GM12878 (cell line): ENCODE measurements at regions of chr5 and their contacts with region 1.

Region 1: GRCh38 chr5:173823711-173824528 is 64.2 kb upstream of the CPEB4 start:
- DNase-seq: no peak
- ATAC-seq: no peak
- H3K4me3 ChIP-seq: no peak overlapping the region
- H3K27ac ChIP-seq: peak overlapping the region; percentile 96
- H3K4me1 ChIP-seq: peaks cover 55% of the 10 kb centered on the region
- H3K27me3 ChIP-seq: no peaks in the 10 kb centered on the region
- CTCF ChIP-seq: no peak
- EP300 ChIP-seq: no peak
- POLR2A ChIP-seq: no peak
- RAD21 ChIP-seq: no peak

Region 2: GRCh38 chr5:173625696-173626504 is 198.0 kb before region 1 on chr5:
- CTCF ChIA-PET with region 1: interaction called, 12 read pairs
- POLR2A ChIA-PET with region 1: interaction called, 5 read pairs
- RAD21 ChIA-PET with region 1: interaction called, 8 read pairs
- SMC1A ChIA-PET with region 1: interaction called, 5 read pairs
- in situ Hi-C with region 1: no loop called
- intact Hi-C with region 1: no loop called
- DNase-seq: no peak
- ATAC-seq: peak; percentile 81
- H3K4me3 ChIP-seq: no peak overlapping the region
- H3K27ac ChIP-seq: no peak overlapping the region
- H3K4me1 ChIP-seq: peaks cover 9% of the 10 kb centered on the region
- H3K27me3 ChIP-seq: no peaks in the 10 kb centered on the region
- CTCF ChIP-seq: peak; percentile 60 to 71 (median 61)
- EP300 ChIP-seq: no peak
- POLR2A ChIP-seq: no peak
- RAD21 ChIP-seq: peak; percentile 85

Region 3: DNA sequence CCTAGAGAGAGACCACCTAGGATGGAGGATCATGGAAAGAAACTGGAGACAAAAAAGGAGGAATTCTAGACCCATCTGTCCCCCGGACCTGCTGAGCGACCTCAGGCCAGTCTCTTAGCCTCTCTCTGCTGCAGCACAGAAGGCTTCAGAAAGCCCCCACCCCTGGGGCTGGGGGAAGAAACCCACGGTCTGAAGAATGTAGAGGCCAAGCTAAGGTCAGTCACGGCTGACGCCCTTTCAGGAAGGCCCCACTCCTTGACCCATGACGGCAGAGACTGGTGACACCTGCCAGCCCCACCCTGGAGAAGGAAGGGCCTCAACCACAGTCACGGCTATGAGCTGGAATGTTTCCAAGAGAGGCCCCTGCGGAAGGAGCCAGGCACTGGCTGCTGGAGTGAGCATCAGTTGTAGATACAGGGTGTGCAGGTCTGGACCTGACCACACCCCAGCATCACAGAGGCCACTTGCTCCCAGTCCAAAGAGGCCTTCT is 87.0 kb before region 1 on chr5:
- CTCF ChIA-PET with region 1: no interaction called
- POLR2A ChIA-PET with region 1: interaction called, 20 read pairs
- RAD21 ChIA-PET with region 1: interaction called, 22 read pairs
- SMC1A ChIA-PET with region 1: interaction called, 6 read pairs
- in situ Hi-C with region 1: loop called (anchors 5 kb)
- intact Hi-C with region 1: loop called (anchors 2 kb)
- DNase-seq: peak; percentile 76
- ATAC-seq: peak; percentile 91
- H3K4me3 ChIP-seq: peak overlapping the region; percentile 30; the same call in 1 of the 2 replicates
- H3K27ac ChIP-seq: peak overlapping the region; percentile 76
- H3K4me1 ChIP-seq: peaks cover 63% of the 10 kb centered on the region
- H3K27me3 ChIP-seq: no peaks in the 10 kb centered on the region
- CTCF ChIP-seq: no peak
- EP300 ChIP-seq: peak; percentile 47 to 49; a peak in 1 of 4 replicates
- POLR2A ChIP-seq: peak; percentile 48; the same call in 1 of the 2 replicates
- RAD21 ChIP-seq: 0 out of 2 replicates have a peak, but pooled peaks have one; percentile 10

Region 4: GRCh38 chr5:173781814-173782670 is 41.9 kb before region 1 on chr5:
- CTCF ChIA-PET with region 1: interaction called, 87 read pairs
- POLR2A ChIA-PET with region 1: interaction called, 36 read pairs
- RAD21 ChIA-PET with region 1: interaction called, 147 read pairs
- SMC1A ChIA-PET with region 1: interaction called, 271 read pairs
- in situ Hi-C with region 1: no loop called
- intact Hi-C with region 1: loop called (anchors 1 kb)
- DNase-seq: peak; percentile 32
- ATAC-seq: peak; percentile 21
- H3K4me3 ChIP-seq: no peak overlapping the region
- H3K27ac ChIP-seq: 0 out of 2 replicates have a peak overlapping the region, but pooled peaks have one; percentile 4
- H3K4me1 ChIP-seq: peaks cover 36% of the 10 kb centered on the region
- H3K27me3 ChIP-seq: no peaks in the 10 kb centered on the region
- CTCF ChIP-seq: no peak
- EP300 ChIP-seq: no peak
- POLR2A ChIP-seq: no peak
- RAD21 ChIP-seq: no peak

Region 5: DNA sequence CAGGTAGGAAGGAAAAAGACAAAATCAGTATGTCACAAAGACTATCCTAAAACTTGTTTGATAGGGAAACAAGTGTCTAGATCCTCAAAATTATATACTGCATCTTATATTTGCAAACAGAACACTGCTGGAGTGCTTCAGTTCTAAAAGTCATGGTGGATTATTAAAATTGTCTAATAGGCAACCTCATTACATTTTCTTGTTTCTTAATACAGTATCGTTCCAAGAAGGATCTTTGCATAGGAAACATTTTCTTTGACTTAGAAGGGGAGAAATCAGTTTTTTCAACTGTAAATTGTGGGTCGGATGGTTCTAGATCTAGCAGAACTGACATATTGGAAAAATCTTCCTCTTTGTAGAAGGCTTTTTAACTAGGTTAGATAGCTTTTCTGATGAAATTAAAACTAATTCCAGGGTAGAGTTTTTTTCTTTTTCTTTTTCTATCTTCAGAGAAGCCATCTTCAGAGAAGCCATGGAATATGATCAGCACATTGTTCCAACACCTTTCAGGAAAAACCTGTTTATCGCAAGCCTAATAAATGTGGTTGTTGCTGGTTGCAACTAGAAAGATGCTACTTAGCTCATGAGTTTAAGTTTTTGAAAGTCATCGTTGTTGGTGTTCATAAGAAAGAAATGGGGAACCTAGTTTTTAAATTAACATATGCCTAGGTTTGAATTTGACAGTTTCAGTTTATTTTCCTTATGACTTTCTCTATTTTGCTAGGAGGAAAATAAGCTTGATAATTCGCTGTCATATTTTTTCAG is 71.7 kb after region 1 on chr5:
- CTCF ChIA-PET with region 1: interaction called, 31 read pairs
- POLR2A ChIA-PET with region 1: interaction called, 240 read pairs
- RAD21 ChIA-PET with region 1: interaction called, 395 read pairs
- SMC1A ChIA-PET with region 1: interaction called, 49 read pairs
- in situ Hi-C with region 1: no loop called
- intact Hi-C with region 1: no loop called
- DNase-seq: no peak
- ATAC-seq: peak; percentile 1; the same call in 1 of the 3 replicates
- H3K4me3 ChIP-seq: peak overlapping the region; percentile 54
- H3K27ac ChIP-seq: peak overlapping the region; percentile 65
- H3K4me1 ChIP-seq: peaks cover 3% of the 10 kb centered on the region; the same call in 1 of the 2 replicates
- H3K27me3 ChIP-seq: no peaks in the 10 kb centered on the region
- CTCF ChIP-seq: no peak
- EP300 ChIP-seq: no peak
- POLR2A ChIP-seq: no peak
- RAD21 ChIP-seq: no peak

Region 6: DNA sequence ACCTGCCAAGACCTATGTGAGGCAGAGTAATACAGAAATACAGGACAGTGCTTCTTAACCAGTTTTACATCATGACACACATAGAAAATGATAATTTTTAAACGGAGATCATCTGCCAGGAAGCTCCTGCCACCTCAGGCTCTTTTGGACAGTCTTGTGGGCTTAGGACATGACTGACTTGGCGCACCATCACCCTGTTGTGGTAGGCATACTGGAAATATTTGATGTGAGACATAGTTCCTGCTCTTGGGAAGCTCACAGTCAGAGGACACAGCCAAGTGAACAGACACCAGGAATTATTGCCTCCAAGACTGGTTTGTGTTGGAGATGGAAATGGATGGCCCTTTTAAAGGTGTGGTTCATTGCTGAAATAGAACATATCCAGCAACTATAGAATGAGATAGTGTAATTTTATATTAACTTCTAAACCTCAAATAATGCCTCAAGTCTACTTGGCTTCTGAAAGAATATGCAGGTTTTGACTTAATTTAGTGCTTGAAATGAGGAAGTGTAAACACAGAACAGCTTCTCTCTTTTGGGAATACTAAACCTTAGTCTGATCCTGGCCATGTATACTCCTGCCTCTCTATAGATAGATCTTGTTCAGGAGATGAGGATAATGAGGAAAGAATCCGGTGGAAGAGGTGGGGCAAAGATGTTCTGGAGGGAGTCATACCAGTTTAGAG is 83.9 kb after region 1 on chr5:
- CTCF ChIA-PET with region 1: interaction called, 6 read pairs
- POLR2A ChIA-PET with region 1: interaction called, 6 read pairs
- RAD21 ChIA-PET with region 1: interaction called, 15 read pairs
- SMC1A ChIA-PET with region 1: interaction called, 15 read pairs
- in situ Hi-C with region 1: no loop called
- intact Hi-C with region 1: no loop called
- DNase-seq: no peak
- ATAC-seq: peak; percentile 38
- H3K4me3 ChIP-seq: no peak overlapping the region
- H3K27ac ChIP-seq: peak overlapping the region; percentile 60
- H3K4me1 ChIP-seq: peaks cover 31% of the 10 kb centered on the region
- H3K27me3 ChIP-seq: no peaks in the 10 kb centered on the region
- CTCF ChIP-seq: no peak
- EP300 ChIP-seq: no peak
- POLR2A ChIP-seq: no peak
- RAD21 ChIP-seq: no peak

Region 7: DNA sequence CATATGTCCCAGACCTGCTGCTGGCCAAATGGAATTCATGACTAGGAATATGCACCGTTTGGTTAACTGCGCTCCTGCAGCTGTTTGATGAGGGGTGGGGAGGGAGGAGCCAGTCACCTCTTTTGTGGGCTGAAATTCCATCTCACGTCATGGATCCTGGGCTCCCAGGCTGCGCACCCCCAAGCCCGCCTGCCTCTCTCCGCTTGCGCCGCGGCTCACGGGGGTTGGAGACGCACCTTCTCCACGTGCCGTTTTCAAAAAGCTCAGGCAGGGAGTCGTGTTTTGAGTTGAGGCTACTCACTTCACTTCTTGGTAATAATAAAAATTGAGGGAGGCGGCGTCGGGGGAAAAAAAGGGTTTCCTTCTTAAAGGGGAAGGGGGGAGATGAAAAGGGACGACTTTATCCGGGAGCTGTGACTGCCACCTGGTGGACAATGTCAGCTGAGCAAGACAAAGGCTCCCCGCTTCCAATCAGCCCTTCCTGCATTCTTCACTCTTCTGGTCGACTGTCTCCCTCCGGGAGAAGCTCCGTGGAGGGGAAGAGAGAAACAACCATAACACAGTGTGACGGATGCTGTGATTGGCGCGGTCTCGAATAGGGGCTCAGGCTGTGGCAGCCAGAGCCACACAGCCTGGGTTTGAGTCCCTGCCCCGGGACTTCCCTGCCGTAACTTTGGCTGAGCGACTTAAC is 149.2 kb after region 1 on chr5:
- CTCF ChIA-PET with region 1: interaction called, 6 read pairs
- POLR2A ChIA-PET with region 1: interaction called, 3 read pairs
- RAD21 ChIA-PET with region 1: interaction called, 3 read pairs
- SMC1A ChIA-PET with region 1: interaction called, 5 read pairs
- in situ Hi-C with region 1: no loop called
- intact Hi-C with region 1: loop called (anchors 5 kb)
- DNase-seq: peak; percentile 40
- ATAC-seq: peak; percentile 92
- H3K4me3 ChIP-seq: peak overlapping the region; percentile 66
- H3K27ac ChIP-seq: no peak overlapping the region
- H3K4me1 ChIP-seq: peaks cover 12% of the 10 kb centered on the region
- H3K27me3 ChIP-seq: no peaks in the 10 kb centered on the region
- CTCF ChIP-seq: peak; percentile 77 to 88 (median 82); a peak in 5 of 6 replicates
- EP300 ChIP-seq: no peak
- POLR2A ChIP-seq: no peak
- RAD21 ChIP-seq: peak; percentile 84